ENCODE measurements at regions of chr11 and their contacts with region 1.

Region 1: DNA sequence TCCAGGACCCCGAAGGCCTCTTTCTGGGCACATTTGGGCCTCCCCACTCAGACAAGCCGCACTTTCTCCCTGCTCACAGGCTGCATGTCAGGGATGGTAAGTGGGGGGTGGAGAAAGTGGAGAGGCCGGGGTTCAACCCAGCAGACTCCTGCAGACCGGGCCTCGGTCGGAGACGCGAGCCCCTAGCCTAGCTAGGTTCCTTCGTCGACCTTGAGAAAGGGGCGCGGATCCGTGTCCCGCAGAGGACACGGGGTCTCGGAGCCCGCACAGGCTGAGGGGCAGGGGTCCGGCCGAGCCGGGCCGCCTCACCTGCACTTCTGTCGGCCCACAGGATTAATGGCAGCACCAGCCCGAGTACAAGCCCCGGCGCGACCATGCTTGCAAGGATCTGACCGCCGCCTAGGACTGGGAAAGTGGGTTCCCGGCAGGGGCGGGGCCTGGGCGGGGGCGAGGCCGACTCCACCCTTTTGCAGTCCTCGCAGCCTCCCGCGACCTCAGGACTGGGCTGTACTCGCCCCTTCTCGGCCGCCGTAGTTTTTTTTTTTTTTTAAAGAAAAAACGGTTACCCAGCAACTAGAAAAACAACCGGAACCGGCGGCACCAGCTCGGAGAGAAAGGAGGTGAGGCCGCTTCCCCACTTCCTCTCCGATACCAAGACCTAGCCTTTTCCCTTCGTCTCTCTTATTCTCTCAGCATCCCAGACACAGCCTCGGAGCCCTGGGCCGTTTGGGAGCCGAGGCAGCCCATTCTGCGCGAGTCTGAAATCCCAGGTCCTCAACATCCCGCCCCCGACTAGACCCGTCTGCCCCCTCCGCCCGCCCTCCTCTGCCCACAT is at the starts of genes SIAE and SPA17:
- DNase-seq: peak; percentile 96
- H3K4me3 ChIP-seq: peak within 1 kb of the TSS; percentile 72 to 95 (median 78)
- H3K27ac ChIP-seq: peak within 1 kb of the TSS; percentile 90 to 95 (median 92)
- H3K4me1 ChIP-seq: peaks cover 10 to 54% (median 17%) of the 10 kb centered on the region in 4 donors
- H3K27me3 ChIP-seq: no peaks in the 10 kb centered on the region
- CTCF ChIP-seq: no peak
- EP300 ChIP-seq: peak; percentile 42
- POLR2A ChIP-seq: peak; percentile 90
- total RNA-seq, gene SIAE: 38.4 to 183 (median 81.2) TPM
- total RNA-seq, gene SPA17: 1.6 to 9.0 (median 6.1) TPM

Region 2: GRCh38 chr11:124551189-124551588 is 122.4 kb before region 1 on chr11:
- in situ Hi-C with region 1: no loop called
- intact Hi-C with region 1: no loop called
- DNase-seq: no peak
- H3K4me3 ChIP-seq: no peak overlapping the region
- H3K27ac ChIP-seq: no peak overlapping the region
- H3K4me1 ChIP-seq: no peaks in the 10 kb centered on the region
- H3K27me3 ChIP-seq: no peaks in the 10 kb centered on the region
- CTCF ChIP-seq: no peak
- EP300 ChIP-seq: no peak
- POLR2A ChIP-seq: no peak

Region 3: GRCh38 chr11:124732230-124732629 is 58.7 kb after region 1 on chr11:
- in situ Hi-C with region 1: no loop called
- intact Hi-C with region 1: no loop called
- DNase-seq: no peak
- H3K4me3 ChIP-seq: no peak overlapping the region
- H3K27ac ChIP-seq: no peak overlapping the region
- H3K4me1 ChIP-seq: peaks cover 0 to 5% (median 0%) of the 10 kb centered on the region in 4 donors
- H3K27me3 ChIP-seq: no peaks in the 10 kb centered on the region
- CTCF ChIP-seq: no peak
- EP300 ChIP-seq: no peak
- POLR2A ChIP-seq: no peak

Region 4: DNA sequence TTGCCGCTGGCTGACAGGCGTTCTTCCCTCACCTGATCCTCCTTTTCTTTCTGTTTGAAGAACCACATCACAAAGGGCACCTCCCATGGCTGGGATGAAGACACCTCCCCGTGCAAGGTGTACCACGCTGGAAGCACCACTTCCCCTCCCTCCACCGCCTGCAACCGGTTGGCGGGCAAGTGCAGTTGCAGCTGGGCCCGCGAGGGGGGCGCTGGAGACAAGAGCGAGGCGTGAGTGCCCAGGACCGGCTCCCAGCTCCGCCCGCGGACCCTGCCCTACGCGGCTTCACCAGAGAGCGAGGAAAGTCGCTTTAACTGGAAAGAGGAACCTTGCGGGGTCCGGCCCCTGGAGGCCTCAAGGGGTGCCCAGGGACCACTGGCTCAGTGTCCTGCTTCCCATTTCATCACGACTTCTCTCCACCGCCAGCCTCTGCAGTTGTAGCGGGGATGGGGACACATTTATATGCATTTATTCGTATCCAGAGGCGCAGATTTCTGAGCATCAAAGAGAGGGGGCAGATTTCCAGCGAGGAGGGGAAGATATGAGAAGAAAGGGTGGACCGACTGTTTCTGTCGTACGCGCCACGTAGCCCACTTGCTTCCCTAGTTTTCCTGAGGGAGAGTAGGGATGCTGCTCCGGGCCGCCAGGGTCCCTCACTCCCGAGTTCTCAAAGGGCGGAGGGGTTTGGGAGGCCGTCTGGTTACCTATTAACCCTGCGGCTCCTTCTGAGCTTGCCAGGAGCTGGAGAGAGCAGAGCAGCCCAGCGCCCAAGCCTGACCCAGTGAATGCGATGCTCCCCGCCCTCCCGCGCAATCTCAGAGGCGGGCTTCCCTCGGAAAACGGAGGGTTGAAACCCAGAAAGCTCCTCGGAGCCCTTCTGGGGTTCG is 85.0 kb after region 1 on chr11:
- in situ Hi-C with region 1: loop called (anchors 5 to 25 kb)
- intact Hi-C with region 1: loop called (anchors 2 kb)
- DNase-seq: peak; percentile 91
- H3K4me3 ChIP-seq: peak overlapping the region in 3 of 4 donors; percentile 3 to 46 (median 22)
- H3K27ac ChIP-seq: peak overlapping the region; percentile 38 to 61 (median 52)
- H3K4me1 ChIP-seq: peaks cover 10 to 47% (median 33%) of the 10 kb centered on the region in 4 donors
- H3K27me3 ChIP-seq: peaks cover 71% of the 10 kb centered on the region
- CTCF ChIP-seq: peak; percentile 72 to 93 (median 83)
- EP300 ChIP-seq: no peak
- POLR2A ChIP-seq: no peak

Region 5: GRCh38 chr11:124817036-124817435 is 143.5 kb after region 1 on chr11:
- in situ Hi-C with region 1: no loop called
- intact Hi-C with region 1: no loop called
- DNase-seq: peak; percentile 45
- H3K4me3 ChIP-seq: no peak overlapping the region
- H3K27ac ChIP-seq: no peak overlapping the region
- H3K4me1 ChIP-seq: no peaks in the 10 kb centered on the region
- H3K27me3 ChIP-seq: peaks cover 40% of the 10 kb centered on the region
- CTCF ChIP-seq: no peak
- EP300 ChIP-seq: no peak
- POLR2A ChIP-seq: no peak

Region 6: GRCh38 chr11:124837491-124837856 is 163.9 kb after region 1 on chr11:
- in situ Hi-C with region 1: loop called (anchors 5 to 25 kb)
- intact Hi-C with region 1: loop called (anchors 1 kb)
- DNase-seq: no peak
- H3K4me3 ChIP-seq: no peak overlapping the region
- H3K27ac ChIP-seq: peak overlapping the region in 1 of 4 donors; percentile 67
- H3K4me1 ChIP-seq: peaks cover 11 to 39% (median 16%) of the 10 kb centered on the region in 4 donors
- H3K27me3 ChIP-seq: peaks cover 53% of the 10 kb centered on the region
- CTCF ChIP-seq: no peak
- EP300 ChIP-seq: no peak
- POLR2A ChIP-seq: no peak

Region 7: DNA sequence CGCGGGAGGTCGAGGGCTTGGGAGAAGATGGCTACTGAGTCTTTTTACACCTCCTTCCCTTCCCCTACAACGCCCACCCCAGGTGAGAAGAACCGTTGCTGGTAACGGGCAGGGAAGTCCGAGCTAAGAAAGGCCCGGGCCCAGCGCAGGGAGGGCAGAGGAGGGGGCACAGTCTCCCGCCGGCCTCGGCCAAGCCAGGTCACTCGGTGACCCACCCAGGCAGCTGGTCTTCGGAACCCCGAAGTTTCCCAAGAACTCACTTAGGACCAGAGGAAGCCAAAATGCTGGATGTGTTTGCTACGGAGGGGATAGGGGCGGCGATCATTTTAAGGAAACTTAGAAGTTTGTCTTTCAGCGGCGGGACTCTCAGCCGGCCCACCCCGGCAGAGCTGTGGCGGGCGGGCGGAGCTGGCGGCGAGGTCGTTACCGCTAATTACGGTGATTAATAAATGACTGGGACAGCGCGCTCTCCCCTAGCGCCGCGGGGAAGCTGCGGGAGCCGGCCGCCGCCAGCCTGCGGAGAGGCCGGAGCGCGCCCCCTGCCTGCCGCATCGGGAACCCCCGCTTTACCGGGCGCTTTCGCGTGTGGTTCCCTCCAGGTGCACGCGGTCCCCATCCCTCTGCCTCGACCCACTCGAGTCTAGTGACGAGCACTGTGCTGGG is 192.5 kb after region 1 on chr11:
- in situ Hi-C with region 1: no loop called
- intact Hi-C with region 1: loop called (anchors 10 kb)
- DNase-seq: peak; percentile 31
- H3K4me3 ChIP-seq: peak overlapping the region in 2 of 4 donors; percentile 9 to 42
- H3K27ac ChIP-seq: no peak overlapping the region
- H3K4me1 ChIP-seq: peaks cover 12 to 49% (median 22%) of the 10 kb centered on the region in 4 donors
- H3K27me3 ChIP-seq: peaks cover 100% of the 10 kb centered on the region
- CTCF ChIP-seq: peak; percentile 51 to 78 (median 77)
- EP300 ChIP-seq: no peak
- POLR2A ChIP-seq: no peak

Measured in transverse colon (tissue), 4 donors.